ENCODE measurements at regions of chr4 and their contacts with region 1.

Region 1: DNA sequence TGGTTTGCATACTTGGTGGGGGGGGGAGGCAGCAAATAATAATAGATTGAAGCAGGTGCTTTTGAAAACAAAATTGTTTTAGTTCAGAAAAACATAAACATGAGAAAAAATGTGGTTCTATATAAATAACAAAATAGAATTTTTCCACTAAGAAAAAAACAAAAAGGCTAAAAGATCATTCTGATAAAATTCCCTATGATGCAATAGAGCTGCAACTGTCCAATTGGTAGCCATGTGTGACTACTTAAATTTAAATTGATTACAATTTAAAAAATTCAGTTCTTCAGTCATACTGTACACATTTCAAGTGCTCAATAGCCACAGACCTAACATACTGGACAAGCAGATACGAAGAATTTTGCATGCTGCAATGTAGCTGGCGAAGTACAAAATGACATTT is 11.0 kb downstream of the TRMT10A start:
- DNase-seq: no peak
- ATAC-seq: no peak
- H3K4me3 ChIP-seq: no peak overlapping the region
- H3K27ac ChIP-seq: no peak overlapping the region
- H3K4me1 ChIP-seq: no peaks in the 10 kb centered on the region
- H3K27me3 ChIP-seq: no peaks in the 10 kb centered on the region
- CTCF ChIP-seq: no peak

Region 2: GRCh38 chr4:99574530-99575324 is 21.9 kb after region 1 on chr4 and contains the start of gene MTTP:
- intact Hi-C with region 1: loop called in 1 of 10 experiments (anchors 2 kb)
- DNase-seq: no peak
- ATAC-seq: no peak
- H3K4me3 ChIP-seq: no peak within 1 kb of the TSS
- H3K27ac ChIP-seq: no peak within 1 kb of the TSS
- H3K4me1 ChIP-seq: peaks cover 0 to 8% (median 0%) of the 10 kb centered on the region in 9 donors
- H3K27me3 ChIP-seq: peaks cover 0 to 42% (median 0%) of the 10 kb centered on the region in 7 donors
- CTCF ChIP-seq: no peak
- total RNA-seq, gene MTTP: 1.5 to 5.9 (median 3.6) TPM

Measured in heart right ventricle (tissue), 16 donors.